ENCODE measurements at regions of chr16 and their contacts with region 1.

Region 1: DNA sequence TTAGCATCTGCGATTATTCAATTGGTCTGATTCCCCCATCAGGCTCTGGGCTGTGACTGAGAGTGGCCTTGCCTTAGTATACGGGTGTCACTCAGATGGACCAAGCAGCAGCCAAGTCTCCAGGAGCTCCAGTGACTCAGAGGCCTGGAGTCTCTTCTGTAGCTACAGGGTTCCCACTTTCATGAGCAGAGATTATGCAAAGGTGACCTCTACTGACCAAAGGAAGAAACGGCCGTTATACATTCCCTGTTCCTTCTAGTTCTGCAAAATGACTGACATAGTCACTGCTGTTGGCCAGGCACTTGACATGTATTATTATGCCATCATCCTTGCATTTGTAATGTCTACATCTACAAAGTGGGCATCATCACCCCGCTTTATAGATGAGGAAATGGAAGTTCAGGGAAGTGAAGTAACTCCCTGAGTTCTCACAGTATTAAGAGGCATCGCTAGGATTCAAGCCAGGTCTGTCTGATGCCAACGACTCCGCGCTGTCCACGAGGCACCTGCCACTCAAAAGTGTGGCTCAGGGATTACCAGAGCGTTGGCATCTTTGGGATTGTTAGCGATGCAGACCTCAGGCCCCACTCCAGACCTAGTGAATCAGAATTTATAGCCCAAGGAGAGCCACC is 23.3 kb downstream of the SLC38A7 start:
- DNase-seq: peak in 1 of 10 donors; percentile 17

Region 2: GRCh38 chr16:58515125-58515870 is 146.0 kb before region 1 on chr16 and contains the start of gene SETD6:
- intact Hi-C with region 1: loop called (anchors 10 kb)
- DNase-seq: peak; percentile 87 to 98 (median 92)

Region 3: DNA sequence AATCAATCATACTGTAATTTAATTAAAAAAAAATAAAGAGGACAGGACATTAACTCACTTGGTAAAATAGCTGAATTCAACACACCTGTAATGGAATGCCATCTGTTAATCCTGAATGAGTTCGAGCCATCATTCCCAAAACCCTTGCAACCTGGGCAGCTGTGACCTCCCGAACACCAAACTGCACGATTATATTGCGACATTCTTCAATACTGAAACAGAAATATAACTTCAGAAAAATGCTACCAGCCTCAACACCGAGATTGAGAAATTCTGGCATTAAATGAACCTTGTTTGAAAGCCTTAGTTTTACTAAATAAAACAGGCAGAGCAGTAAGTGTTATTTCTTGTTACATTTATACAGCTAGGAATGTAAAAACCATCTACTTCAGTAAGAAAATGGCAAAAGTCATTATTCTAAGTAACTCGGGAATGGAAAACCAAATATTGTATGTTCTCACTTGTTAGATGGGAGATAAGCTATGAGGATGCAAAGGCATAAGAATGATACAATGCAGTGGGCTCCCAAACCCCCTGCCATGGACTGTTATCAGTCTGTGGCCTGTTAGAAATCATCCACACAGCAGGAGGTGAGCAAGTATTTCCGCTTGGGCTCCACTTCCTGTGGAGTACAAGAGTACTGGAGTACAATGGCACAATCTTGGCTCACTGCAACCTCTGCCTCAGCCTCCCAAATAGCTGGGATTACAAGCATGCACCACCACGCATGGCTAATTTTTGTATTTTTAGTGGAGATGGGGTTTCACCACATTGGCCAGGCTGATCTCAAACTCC is 78.1 kb before region 1 on chr16:
- intact Hi-C with region 1: no loop called
- DNase-seq: no peak